ENCODE measurements at regions of chr1 and their contacts with region 1.

Region 1: DNA sequence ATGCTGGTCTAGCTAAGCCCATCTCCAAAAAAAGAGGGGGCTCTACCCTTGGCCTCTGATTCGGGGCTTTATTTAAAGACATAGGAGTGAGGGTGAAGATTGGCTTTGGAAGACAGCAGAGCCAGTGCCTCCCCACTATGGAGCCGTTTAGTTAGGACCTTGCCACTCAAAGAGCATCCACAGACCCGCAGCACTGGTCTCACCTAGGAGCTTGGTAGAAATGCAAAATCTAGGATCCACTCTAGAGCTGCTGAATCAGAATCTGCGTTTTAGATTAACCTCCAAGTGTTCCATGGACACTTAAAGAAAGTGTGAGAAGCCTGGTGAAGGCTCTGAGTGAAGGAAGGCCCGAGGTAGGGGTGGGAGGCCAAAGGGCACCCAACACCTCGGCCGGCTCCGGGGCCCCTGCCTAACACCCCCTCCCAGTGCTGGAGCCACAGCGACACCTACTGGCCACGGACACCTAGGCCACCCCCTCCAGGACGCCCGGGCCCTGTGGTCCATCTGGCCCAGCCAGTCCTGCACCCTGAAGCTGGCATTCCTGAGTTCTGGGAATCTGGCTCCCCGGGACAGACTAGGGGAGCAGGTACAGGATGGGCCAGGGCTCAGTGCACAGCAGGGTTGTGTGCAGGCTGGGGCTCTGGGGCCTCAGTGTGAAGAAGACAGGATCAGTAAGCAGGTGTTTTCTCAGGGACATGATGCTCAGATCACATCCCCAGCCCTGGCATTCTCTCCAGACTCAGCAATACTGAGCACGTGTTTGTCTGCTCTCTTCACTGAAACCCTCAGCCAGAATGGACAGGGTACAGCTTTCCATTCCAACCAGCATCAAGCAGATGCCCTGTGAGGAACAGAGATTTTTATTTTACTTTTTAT is 79.2 kb downstream of the TMEM53 start:
- DNase-seq: peak; percentile 90
- H3K27ac ChIP-seq: no peak overlapping the region
- CTCF ChIP-seq: peak; percentile 89

Region 2: GRCh38 chr1:44217809-44218410 is 377.2 kb before region 1 on chr1:
- CTCF ChIA-PET with region 1: interaction called, 19 read pairs
- POLR2A ChIA-PET with region 1: no interaction called
- DNase-seq: peak; percentile 65
- H3K27ac ChIP-seq: peak overlapping the region; percentile 48
- CTCF ChIP-seq: peak; percentile 89

Region 3: GRCh38 chr1:44584167-44584566 is 10.9 kb before region 1 on chr1:
- CTCF ChIA-PET with region 1: interaction called, 16 read pairs
- POLR2A ChIA-PET with region 1: no interaction called
- DNase-seq: no peak
- H3K27ac ChIP-seq: no peak overlapping the region
- CTCF ChIP-seq: no peak

Region 4: DNA sequence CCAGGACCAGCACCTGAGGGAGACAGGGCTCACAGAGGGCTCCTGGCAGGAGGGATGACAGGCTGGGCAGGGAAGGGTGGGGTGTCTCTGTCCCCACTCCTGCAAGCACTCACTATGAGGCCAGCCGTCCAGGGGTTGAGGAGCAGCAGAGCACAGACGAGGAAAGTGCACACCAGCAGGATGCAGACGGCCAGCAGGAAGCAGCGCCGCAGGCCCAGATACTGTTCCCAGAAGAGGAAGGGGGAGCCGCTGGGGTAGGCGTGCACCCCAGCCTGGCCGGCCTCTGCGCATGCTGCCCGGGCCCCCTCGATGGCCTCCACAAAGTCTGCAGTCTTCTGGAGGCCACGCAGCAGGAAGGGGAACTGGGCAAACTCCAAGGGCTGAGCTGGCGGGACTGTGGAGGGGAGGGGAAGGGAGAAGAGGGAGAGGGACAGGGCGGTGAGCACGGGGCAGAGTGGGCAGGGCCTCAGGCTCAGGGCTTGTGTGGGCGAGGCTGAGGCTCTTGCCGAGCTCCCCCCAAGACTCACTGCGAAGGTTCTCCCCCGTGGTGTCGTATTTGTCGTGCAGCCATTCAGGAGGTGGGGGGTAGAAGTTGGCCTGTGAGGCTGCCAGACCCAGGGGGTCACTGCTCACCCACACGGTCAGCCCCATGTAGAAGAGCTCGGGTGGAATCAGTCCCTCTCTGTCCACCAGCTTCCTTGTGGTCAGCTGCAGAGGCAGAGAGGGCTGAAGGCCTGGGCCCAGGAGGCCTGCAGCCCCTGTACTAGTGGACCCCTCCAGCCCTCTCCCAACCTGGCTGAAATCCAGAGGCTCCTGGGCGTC is 231.5 kb after region 1 on chr1:
- CTCF ChIA-PET with region 1: no interaction called
- POLR2A ChIA-PET with region 1: no interaction called
- DNase-seq: no peak
- H3K27ac ChIP-seq: peak overlapping the region; percentile 12; the same call in 1 of the 2 replicates
- CTCF ChIP-seq: no peak

Measured in RWPE1 (cell line).